ENCODE measurements at regions of chr11 and their contacts with region 1.

Region 1: GRCh38 chr11:125345421-125346178 is 150.5 kb downstream of the FEZ1 start:
- DNase-seq: peak; percentile 60
- H3K4me3 Mint-ChIP-seq: no peak overlapping the region
- H3K27ac Mint-ChIP-seq: no peak overlapping the region
- H3K4me1 Mint-ChIP-seq: no peaks in the 10 kb centered on the region
- H3K27me3 Mint-ChIP-seq: peaks cover 43% of the 10 kb centered on the region

Region 2: DNA sequence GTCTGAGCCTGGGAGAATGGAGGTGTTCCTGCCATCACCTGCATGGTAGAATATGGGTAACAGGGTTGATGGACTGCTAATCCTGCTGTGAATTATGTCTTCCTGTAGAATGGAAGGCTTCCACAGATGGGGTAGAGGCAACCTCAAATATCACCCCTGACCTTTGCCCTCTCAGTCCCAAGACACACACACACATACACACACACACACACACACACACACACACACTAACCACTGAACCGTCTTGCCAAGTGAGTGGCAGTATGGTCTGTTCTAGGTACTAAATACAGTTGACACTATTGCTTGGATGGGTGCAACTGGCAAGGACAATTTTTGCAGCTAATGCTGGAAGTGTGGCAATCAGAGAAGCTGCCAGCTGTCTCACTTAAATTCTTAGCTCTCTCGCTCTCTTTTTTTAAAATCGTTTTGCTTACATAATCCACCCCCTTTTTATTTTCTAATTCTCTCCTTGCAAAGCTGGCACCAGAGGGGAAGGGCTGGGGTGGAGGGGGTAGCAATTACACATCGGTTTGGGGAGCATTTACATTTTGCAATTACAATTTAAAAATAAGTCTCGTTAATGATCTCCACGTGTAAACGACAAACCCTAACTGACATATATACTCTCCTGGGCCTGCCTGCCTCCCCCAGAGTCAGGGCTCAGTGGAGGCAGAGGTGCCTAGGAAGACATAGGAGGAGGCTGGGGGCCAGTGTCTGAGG is 12.1 kb before region 1 on chr11:
- CTCF ChIA-PET with region 1: interaction called, 11 read pairs
- DNase-seq: no peak
- H3K4me3 Mint-ChIP-seq: no peak overlapping the region
- H3K27ac Mint-ChIP-seq: no peak overlapping the region
- H3K4me1 Mint-ChIP-seq: no peaks in the 10 kb centered on the region
- H3K27me3 Mint-ChIP-seq: peaks cover 31% of the 10 kb centered on the region

Region 3: GRCh38 chr11:125356797-125357196 is 11.2 kb after region 1 on chr11:
- CTCF ChIA-PET with region 1: interaction called, 13 read pairs
- DNase-seq: no peak
- H3K4me3 Mint-ChIP-seq: no peak overlapping the region
- H3K27ac Mint-ChIP-seq: no peak overlapping the region
- H3K4me1 Mint-ChIP-seq: peaks cover 2% of the 10 kb centered on the region
- H3K27me3 Mint-ChIP-seq: peaks cover 12% of the 10 kb centered on the region

Measured in activated naive CD4-positive, alpha-beta T cell treated with anti-CD3 and anti-CD28 coated beads, Interleukin-2, amount 10 ng/mL, durations not matched to agents 7 days and 5 days (primary cell).